Colonic mucosa (tissue), 4 donors: ENCODE measurements at regions of chr22 and their contacts with region 1.

Region 1: DNA sequence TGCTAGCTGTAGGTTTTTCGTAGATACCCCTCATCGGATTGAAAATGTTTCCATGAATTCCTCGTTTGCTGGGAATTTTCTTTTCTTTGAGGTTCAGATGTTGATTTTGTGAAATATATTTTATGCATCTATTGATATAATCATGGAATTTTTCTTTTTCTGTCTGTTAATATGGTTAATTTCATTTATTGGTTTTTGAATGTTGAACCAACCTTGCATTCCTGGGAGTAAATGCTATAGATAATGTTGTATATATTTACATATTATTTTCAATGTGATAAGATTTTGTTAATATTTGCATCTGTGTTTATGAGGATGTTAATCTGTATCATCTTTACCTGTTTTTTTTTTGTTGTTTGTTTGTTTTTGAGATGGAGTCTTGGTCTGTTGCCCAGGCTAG is 10.6 kb upstream of the NDUFA6 start:
- DNase-seq: no peak
- H3K4me3 ChIP-seq: no peak overlapping the region
- H3K27ac ChIP-seq: no peak overlapping the region
- H3K4me1 ChIP-seq: no peaks in the 10 kb centered on the region
- H3K27me3 ChIP-seq: no peaks in the 10 kb centered on the region
- CTCF ChIP-seq: no peak

Region 2: DNA sequence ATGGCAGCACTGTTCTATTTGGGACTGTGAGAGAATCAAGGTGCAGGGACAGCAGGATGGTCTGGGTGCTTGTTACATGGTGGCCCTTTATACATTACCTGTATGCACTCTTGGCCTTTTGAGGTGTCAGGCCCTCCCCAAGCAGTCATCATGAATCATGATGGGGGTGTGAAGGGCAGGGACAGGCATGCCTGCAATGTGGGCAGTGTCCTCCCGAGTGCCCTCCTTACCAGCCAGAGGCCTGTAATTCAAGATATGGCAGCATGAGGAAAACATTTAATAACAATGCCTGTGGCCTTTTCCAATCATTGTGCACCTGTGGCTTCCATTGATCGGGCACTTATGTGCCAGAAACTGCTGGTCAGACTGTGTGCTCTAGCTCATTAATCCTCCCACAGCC is 54.9 kb after region 1 on chr22:
- intact Hi-C with region 1: loop called (anchors 5 kb)
- DNase-seq: no peak
- H3K4me3 ChIP-seq: no peak overlapping the region
- H3K27ac ChIP-seq: no peak overlapping the region
- H3K4me1 ChIP-seq: peaks cover 2% of the 10 kb centered on the region
- H3K27me3 ChIP-seq: no peaks in the 10 kb centered on the region
- CTCF ChIP-seq: no peak

Region 3: DNA sequence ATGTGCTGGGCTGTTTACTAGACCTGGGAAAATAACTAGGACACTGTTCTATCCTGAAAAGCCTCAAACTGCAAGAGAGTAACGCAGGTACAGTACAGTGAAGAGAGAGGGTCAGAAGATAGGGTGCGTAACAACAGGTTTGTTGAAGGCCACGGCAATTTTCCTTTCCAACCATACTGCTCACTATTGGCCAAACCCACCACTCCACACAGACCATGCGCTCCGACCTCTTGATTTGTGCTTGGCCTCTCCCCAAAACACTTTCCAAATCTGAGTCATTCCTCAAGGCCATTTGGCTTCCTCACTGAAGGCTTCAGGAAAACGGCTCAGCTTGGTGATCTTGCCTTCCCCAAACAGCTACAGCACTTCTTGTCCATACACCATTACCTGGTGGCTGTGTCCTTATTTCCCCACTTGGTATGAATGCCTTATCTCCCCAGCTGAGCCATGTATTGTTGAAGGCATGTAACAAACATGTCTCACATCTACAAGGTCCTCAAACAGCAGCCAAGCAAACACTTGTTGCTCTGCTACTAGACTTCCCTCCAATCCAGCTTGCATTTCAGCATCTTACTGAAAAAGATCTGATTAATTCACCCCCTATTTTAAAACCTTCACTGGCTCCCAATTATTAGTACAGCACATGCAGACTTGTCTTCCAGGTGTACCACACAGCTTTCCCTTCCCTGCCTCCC is 128.4 kb after region 1 on chr22:
- intact Hi-C with region 1: no loop called
- DNase-seq: no peak
- H3K4me3 ChIP-seq: no peak overlapping the region
- H3K27ac ChIP-seq: no peak overlapping the region
- H3K4me1 ChIP-seq: peaks cover 3% of the 10 kb centered on the region
- H3K27me3 ChIP-seq: no peaks in the 10 kb centered on the region
- CTCF ChIP-seq: no peak